ENCODE measurements at regions of chr6 and their contacts with region 1.

Region 1: GRCh38 chr6:53348371-53349208 is at the start of gene ELOVL5:
- DNase-seq: peak; percentile 99 to 100 (median 100)
- H3K4me3 ChIP-seq: peak within 1 kb of the TSS; percentile 46 to 87 (median 72)
- H3K27ac ChIP-seq: peak within 1 kb of the TSS; percentile 77 to 100 (median 98)
- H3K4me1 ChIP-seq: peaks cover 5 to 20% of the 10 kb centered on the region in 2 donors
- H3K27me3 ChIP-seq: no peaks in the 10 kb centered on the region
- CTCF ChIP-seq: peak in 2 of 6 experiments; percentile 6 to 21
- POLR2A ChIP-seq: peak; percentile 84 to 93
- total RNA-seq, gene ELOVL5: 103 to 632 (median 167) TPM

Region 2: DNA sequence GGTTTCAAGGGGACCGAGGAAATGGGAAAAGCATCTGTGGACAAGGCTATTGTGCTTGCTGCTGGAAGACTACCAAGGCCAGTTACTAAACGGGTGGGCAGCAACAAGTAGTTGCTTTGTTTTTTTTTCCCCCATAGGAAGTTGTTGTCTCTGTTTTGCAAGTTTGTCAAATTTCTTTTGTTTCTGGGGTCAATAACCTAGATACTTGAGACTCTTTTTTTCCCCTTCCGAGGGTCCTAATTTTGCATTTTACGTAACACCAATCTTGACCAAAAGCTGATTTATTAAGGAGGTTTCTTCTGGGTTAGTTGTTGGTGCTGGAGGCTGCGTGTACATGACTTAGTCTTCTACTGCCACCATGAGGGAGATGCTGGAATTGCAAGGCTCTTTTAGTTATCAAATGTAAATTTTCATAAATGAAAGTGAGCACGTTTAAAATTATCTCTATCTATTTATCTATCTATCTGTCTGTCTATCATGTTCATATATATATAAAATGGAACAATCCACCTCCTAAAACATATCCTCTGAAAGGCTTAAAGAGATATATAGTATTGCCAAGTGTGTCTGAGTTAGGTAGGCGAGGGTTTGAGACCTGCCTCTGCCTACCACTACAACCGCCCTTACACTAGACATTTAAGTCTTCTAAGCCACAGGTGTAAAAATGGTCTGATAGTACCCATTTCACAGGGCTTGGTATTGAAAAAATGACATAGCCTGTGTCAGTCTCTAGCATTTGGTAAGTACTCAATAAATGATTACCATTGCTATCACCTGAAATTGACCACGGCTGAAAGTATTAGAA is 136.1 kb after region 1 on chr6:
- intact Hi-C with region 1: loop called in 1 of 2 experiments (anchors 10 kb)
- DNase-seq: peak; percentile 61 to 94 (median 86)
- H3K4me3 ChIP-seq: peak overlapping the region in 1 of 4 donors; percentile 0
- H3K27ac ChIP-seq: peak overlapping the region in 2 of 5 donors; percentile 11 to 66
- H3K4me1 ChIP-seq: peaks cover 10 to 22% of the 10 kb centered on the region in 2 donors
- H3K27me3 ChIP-seq: no peaks in the 10 kb centered on the region
- CTCF ChIP-seq: peak; percentile 93 to 99 (median 98)
- POLR2A ChIP-seq: no peak